ENCODE measurements at regions of chr22 and their contacts with region 1.

Region 1: GRCh38 chr22:24427500-24428164 is at the start of gene ADORA2A:
- DNase-seq: peak; percentile 93
- H3K4me3 Mint-ChIP-seq: peak within 1 kb of the TSS; percentile 86
- H3K27ac Mint-ChIP-seq: peak within 1 kb of the TSS; percentile 90
- H3K4me1 Mint-ChIP-seq: peaks cover 58% of the 10 kb centered on the region
- H3K27me3 Mint-ChIP-seq: peaks cover under 1% of the 10 kb centered on the region
- total RNA-seq, gene ADORA2A: 34.9 and 36.2 TPM in 2 replicates

Region 2: GRCh38 chr22:24367841-24368240 is 59.8 kb before region 1 on chr22:
- intact Hi-C with region 1: no loop called
- DNase-seq: no peak
- H3K4me3 Mint-ChIP-seq: no peak overlapping the region
- H3K27ac Mint-ChIP-seq: no peak overlapping the region
- H3K4me1 Mint-ChIP-seq: no peaks in the 10 kb centered on the region
- H3K27me3 Mint-ChIP-seq: no peaks in the 10 kb centered on the region

Region 3: DNA sequence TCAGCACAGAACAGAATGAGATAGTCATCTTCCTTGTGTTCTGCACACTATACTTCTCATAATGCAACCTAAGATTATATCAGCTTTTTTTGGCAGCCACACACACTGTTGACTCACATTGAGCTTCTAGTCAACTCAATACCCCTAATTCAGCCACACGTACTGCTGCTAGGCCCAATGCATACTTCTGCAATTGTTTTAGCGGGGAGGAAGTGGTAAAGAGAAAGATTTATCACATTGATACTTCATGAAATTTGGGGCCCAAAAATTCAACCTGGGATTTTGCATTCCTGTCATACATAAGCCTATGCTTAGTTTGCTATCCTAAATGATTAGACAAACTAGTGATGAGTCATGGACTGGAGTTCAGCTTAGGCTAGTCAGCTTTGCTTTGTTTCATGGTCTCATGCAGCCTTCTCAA is 58.9 kb after region 1 on chr22:
- intact Hi-C with region 1: loop called (anchors 2 kb)
- DNase-seq: peak; percentile 67
- H3K4me3 Mint-ChIP-seq: no peak overlapping the region
- H3K27ac Mint-ChIP-seq: peak overlapping the region; percentile 78
- H3K4me1 Mint-ChIP-seq: peaks cover 14% of the 10 kb centered on the region
- H3K27me3 Mint-ChIP-seq: peaks cover 10% of the 10 kb centered on the region